ENCODE measurements at regions of chr20 and their contacts with region 1.

Region 1: GRCh38 chr20:36881888-36882287 is 6.0 kb downstream of the TLDC2 start:
- DNase-seq: no peak
- ATAC-seq: peak; percentile 93
- H3K4me3 ChIP-seq: no peak overlapping the region
- H3K27ac ChIP-seq: no peak overlapping the region
- H3K4me1 ChIP-seq: peaks cover 7% of the 10 kb centered on the region
- H3K27me3 ChIP-seq: no peaks in the 10 kb centered on the region; a peak in 1 of 4 replicates
- CTCF ChIP-seq: no peak
- EP300 ChIP-seq: no peak
- POLR2A ChIP-seq: no peak
- RAD21 ChIP-seq: no peak

Region 2: GRCh38 chr20:36613974-36614373 is 267.9 kb before region 1 on chr20:
- CTCF ChIA-PET with region 1: interaction called, 36 read pairs
- POLR2A ChIA-PET with region 1: interaction called, 3 read pairs
- RAD21 ChIA-PET with region 1: interaction called, 6 read pairs
- SMC1A ChIA-PET with region 1: interaction called, 10 read pairs
- in situ Hi-C with region 1: loop called (anchors 5 kb)
- intact Hi-C with region 1: loop called (anchors 1 kb)
- DNase-seq: no peak
- ATAC-seq: no peak
- H3K4me3 ChIP-seq: no peak overlapping the region
- H3K27ac ChIP-seq: no peak overlapping the region
- H3K4me1 ChIP-seq: no peaks in the 10 kb centered on the region
- H3K27me3 ChIP-seq: no peaks in the 10 kb centered on the region
- CTCF ChIP-seq: no peak
- EP300 ChIP-seq: no peak
- POLR2A ChIP-seq: peak; percentile 35; the same call in 1 of the 2 replicates
- RAD21 ChIP-seq: no peak

Region 3: GRCh38 chr20:36847009-36847709 is 34.7 kb before region 1 on chr20:
- CTCF ChIA-PET with region 1: interaction called, 16 read pairs
- POLR2A ChIA-PET with region 1: interaction called, 15 read pairs
- RAD21 ChIA-PET with region 1: interaction called, 19 read pairs
- SMC1A ChIA-PET with region 1: interaction called, 22 read pairs
- in situ Hi-C with region 1: no loop called
- intact Hi-C with region 1: no loop called
- DNase-seq: no peak
- ATAC-seq: no peak
- H3K4me3 ChIP-seq: no peak overlapping the region
- H3K27ac ChIP-seq: no peak overlapping the region
- H3K4me1 ChIP-seq: peaks cover 80% of the 10 kb centered on the region
- H3K27me3 ChIP-seq: no peaks in the 10 kb centered on the region
- CTCF ChIP-seq: no peak
- EP300 ChIP-seq: no peak
- POLR2A ChIP-seq: no peak
- RAD21 ChIP-seq: no peak

Region 4: GRCh38 chr20:36951198-36951976 is 69.5 kb after region 1 on chr20 and contains the start of gene SAMHD1:
- CTCF ChIA-PET with region 1: no interaction called
- POLR2A ChIA-PET with region 1: no interaction called
- RAD21 ChIA-PET with region 1: no interaction called
- SMC1A ChIA-PET with region 1: no interaction called
- in situ Hi-C with region 1: no loop called
- intact Hi-C with region 1: no loop called
- DNase-seq: peak; percentile 96
- ATAC-seq: peak; percentile 96
- H3K4me3 ChIP-seq: peak within 1 kb of the TSS; percentile 96
- H3K27ac ChIP-seq: peak within 1 kb of the TSS; percentile 78
- H3K4me1 ChIP-seq: peaks cover 5% of the 10 kb centered on the region
- H3K27me3 ChIP-seq: no peaks in the 10 kb centered on the region
- CTCF ChIP-seq: no peak
- EP300 ChIP-seq: no peak
- POLR2A ChIP-seq: peak; percentile 75
- RAD21 ChIP-seq: no peak
- polyA plus RNA-seq, gene SAMHD1: 20.5 to 21.7 TPM